Activated B cell treated with CpG ODN at 0.5 μM for 24 hours (primary cell): ENCODE measurements at regions of chr2 and their contacts with region 1.

Region 1: GRCh38 chr2:120680136-120680761 is 55.4 kb upstream of the GLI2 start:
- DNase-seq: peak; percentile 37
- ATAC-seq: peak; percentile 62
- H3K4me3 Mint-ChIP-seq: no peak overlapping the region
- H3K27ac Mint-ChIP-seq: no peak overlapping the region
- H3K4me1 Mint-ChIP-seq: peaks cover 4% of the 10 kb centered on the region
- H3K27me3 Mint-ChIP-seq: peaks cover 27% of the 10 kb centered on the region
- CTCF ChIP-seq: no peak

Region 2: GRCh38 chr2:119641562-119642258 is 1038.5 kb before region 1 on chr2:
- CTCF ChIA-PET with region 1: interaction called, 12 read pairs
- POLR2A ChIA-PET with region 1: no interaction called
- intact Hi-C with region 1: no loop called
- DNase-seq: peak; percentile 55
- ATAC-seq: peak; percentile 100
- H3K4me3 Mint-ChIP-seq: no peak overlapping the region
- H3K27ac Mint-ChIP-seq: no peak overlapping the region
- H3K4me1 Mint-ChIP-seq: peaks cover 4% of the 10 kb centered on the region
- H3K27me3 Mint-ChIP-seq: peaks cover 10% of the 10 kb centered on the region
- CTCF ChIP-seq: peak; percentile 90

Region 3: DNA sequence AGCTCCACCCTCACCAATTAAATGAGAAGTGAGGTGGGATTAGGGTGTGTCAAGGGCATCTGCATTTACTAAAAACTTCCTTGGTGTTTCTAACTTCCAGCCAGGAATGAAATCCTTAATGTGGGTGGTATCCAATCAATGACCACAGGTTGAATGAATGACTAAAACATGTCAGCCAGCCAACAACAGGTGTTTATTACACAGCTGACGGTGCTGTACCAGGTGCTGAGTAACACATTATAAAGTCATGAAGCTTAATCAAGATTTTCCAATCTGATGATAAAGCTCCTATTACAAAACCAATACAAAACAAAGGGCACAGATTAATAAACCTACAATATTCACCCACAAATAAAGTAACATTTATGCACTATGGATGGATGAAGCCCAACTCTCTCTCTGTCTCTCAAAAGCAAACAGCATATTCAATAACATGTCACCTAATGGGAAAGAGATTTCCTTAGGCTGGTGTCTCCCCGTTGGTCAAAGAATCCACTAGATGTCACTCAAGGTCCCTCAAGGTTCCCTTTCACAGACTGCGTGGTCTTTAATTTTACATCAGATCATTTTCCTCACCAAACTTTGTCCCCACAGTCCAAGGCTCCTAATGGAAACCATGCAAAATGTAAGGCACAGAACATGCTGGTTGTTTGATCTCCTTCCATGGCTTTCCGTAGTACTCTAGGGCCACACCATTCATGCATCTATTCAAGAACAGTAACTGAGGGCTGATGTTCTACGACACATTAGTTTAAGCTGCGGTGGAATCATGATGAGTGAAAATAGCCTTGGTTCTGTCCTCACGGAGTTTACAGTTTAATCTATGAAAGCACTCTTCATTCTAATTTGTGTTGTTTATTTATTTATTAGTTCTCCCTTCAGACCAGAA is 927.0 kb before region 1 on chr2:
- CTCF ChIA-PET with region 1: interaction called, 4 read pairs
- POLR2A ChIA-PET with region 1: no interaction called
- intact Hi-C with region 1: loop called (anchors 2 kb)
- DNase-seq: no peak
- ATAC-seq: peak; percentile 47
- H3K4me3 Mint-ChIP-seq: no peak overlapping the region
- H3K27ac Mint-ChIP-seq: no peak overlapping the region
- H3K4me1 Mint-ChIP-seq: no peaks in the 10 kb centered on the region
- H3K27me3 Mint-ChIP-seq: no peaks in the 10 kb centered on the region
- CTCF ChIP-seq: peak; percentile 42

Region 4: GRCh38 chr2:120109186-120110061 is 570.8 kb before region 1 on chr2:
- CTCF ChIA-PET with region 1: no interaction called
- POLR2A ChIA-PET with region 1: no interaction called
- intact Hi-C with region 1: loop called (anchors 2 kb)
- DNase-seq: no peak
- ATAC-seq: peak; percentile 57
- H3K4me3 Mint-ChIP-seq: peak overlapping the region; percentile 42
- H3K27ac Mint-ChIP-seq: peak overlapping the region; percentile 62
- H3K4me1 Mint-ChIP-seq: peaks cover 17% of the 10 kb centered on the region
- H3K27me3 Mint-ChIP-seq: no peaks in the 10 kb centered on the region
- CTCF ChIP-seq: no peak

Region 5: GRCh38 chr2:120343433-120344105 is 336.7 kb before region 1 on chr2:
- CTCF ChIA-PET with region 1: interaction called, 6 read pairs
- POLR2A ChIA-PET with region 1: no interaction called
- intact Hi-C with region 1: loop called (anchors 1 kb)
- DNase-seq: peak; percentile 27
- ATAC-seq: peak; percentile 52
- H3K4me3 Mint-ChIP-seq: peak overlapping the region; percentile 55
- H3K27ac Mint-ChIP-seq: no peak overlapping the region
- H3K4me1 Mint-ChIP-seq: peaks cover 28% of the 10 kb centered on the region
- H3K27me3 Mint-ChIP-seq: peaks cover 58% of the 10 kb centered on the region
- CTCF ChIP-seq: no peak